PC-9 (cell line): ENCODE measurements at regions of chr20 and their contacts with region 1.

Region 1: DNA sequence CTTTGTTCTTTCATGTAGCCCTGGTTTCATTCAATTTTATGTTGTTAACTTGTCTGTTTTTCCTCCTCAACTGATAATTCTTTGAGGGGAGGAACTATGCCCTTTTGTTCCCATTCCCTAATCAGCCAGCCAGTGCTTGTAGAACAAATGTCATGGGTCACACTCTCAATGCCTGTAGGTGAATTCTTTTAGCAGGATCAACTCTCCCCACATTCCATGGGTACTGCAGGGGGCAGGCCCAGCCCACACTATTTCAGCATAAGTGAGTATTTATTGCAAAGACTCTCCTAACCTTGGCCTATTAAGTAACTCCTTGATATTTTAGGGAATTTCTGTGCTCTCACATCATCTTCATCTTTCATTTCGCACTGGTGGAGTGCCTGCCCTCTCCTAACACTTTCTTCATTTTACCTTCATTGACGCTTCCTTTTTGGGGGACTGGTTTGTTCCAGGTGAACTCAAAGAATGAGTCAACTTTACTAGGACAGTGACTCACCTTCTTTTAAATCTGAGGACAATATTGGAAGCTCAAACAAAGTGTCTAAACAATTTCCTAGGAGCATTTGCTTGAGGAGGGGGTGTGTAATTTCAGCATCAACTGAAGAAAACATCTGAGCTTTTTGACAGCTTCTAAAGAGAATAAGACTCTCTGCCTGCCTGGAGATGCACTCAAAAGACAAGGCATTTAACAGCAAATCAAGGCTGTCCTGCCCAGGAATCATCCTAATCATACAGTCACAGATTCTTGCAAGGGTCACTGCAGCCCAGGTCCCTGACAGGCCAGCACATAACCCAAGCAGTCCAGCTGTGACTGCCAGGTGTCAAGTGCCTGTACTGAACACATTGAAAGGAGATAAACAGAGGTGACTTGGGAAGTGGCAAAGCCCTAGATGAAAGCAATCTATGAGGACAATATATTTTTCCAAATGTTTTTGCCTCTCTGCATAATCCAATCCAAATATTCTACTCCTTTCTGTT is 263.9 kb upstream of the PRND start:
- DNase-seq: peak; percentile 39 to 84
- H3K4me3 ChIP-seq: peak overlapping the region; percentile 13; the same call in 1 of the 2 replicates
- H3K27ac ChIP-seq: peak overlapping the region; percentile 76
- H3K4me1 ChIP-seq: peaks cover 67% of the 10 kb centered on the region
- H3K27me3 ChIP-seq: no peaks in the 10 kb centered on the region
- CTCF ChIP-seq: no peak

Region 2: GRCh38 chr20:4135385-4136077 is 322.3 kb before region 1 on chr20:
- CTCF ChIA-PET with region 1: no interaction called
- POLR2A ChIA-PET with region 1: no interaction called
- intact Hi-C with region 1: loop called (anchors 5 kb)
- DNase-seq: peak; percentile 84 to 97
- H3K4me3 ChIP-seq: no peak overlapping the region
- H3K27ac ChIP-seq: peak overlapping the region; percentile 75
- H3K4me1 ChIP-seq: peaks cover 60% of the 10 kb centered on the region
- H3K27me3 ChIP-seq: no peaks in the 10 kb centered on the region
- CTCF ChIP-seq: no peak

Region 3: DNA sequence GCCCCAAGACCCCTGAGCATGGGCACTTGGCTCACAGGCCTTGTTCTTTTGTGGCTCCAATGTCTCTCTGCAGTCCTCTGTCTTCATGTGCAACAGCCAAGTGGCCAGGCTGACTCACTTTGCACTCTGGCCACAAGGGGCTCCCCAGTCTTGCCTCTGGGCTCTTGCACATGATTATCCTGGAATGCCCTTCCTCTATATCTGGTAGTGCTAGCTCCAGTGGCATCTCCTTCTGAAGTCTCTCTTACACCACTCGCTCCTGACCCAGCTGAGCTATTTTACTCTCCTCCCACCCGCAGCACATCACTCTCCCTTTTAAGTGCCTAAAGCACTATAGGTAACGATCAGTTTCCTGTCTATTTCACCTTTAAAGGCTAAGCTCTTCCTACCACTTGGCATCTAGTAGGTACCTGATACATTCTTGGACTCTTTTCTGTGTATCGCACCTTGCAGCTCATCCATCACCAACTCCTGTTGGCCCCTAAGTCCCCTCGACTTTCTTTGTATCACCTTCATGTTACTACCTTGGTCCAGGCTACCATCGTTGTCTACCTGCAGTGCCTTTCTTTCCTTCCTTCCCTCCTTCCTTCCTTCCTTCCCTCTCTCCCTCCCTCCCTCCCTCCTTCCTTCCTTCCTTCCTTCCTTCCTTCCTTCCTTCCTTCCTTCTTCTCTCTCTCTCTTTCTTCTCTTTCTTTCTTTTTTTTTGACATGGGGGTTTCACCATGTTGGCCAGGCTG is 230.6 kb before region 1 on chr20:
- CTCF ChIA-PET with region 1: no interaction called
- POLR2A ChIA-PET with region 1: no interaction called
- intact Hi-C with region 1: loop called (anchors 2 kb)
- DNase-seq: peak in 1 of 2 experiments; percentile 60
- H3K4me3 ChIP-seq: no peak overlapping the region
- H3K27ac ChIP-seq: no peak overlapping the region; the same call in 1 of the 2 replicates
- H3K4me1 ChIP-seq: peaks cover 32% of the 10 kb centered on the region
- H3K27me3 ChIP-seq: no peaks in the 10 kb centered on the region
- CTCF ChIP-seq: peak; percentile 55

Region 4: GRCh38 chr20:4502756-4503155 is 44.9 kb after region 1 on chr20:
- CTCF ChIA-PET with region 1: no interaction called
- POLR2A ChIA-PET with region 1: no interaction called
- intact Hi-C with region 1: loop called (anchors 1 kb)
- DNase-seq: peak in 1 of 2 experiments; percentile 7
- H3K4me3 ChIP-seq: no peak overlapping the region
- H3K27ac ChIP-seq: no peak overlapping the region
- H3K4me1 ChIP-seq: peaks cover 6% of the 10 kb centered on the region; the same call in 1 of the 2 replicates
- H3K27me3 ChIP-seq: no peaks in the 10 kb centered on the region
- CTCF ChIP-seq: no peak

Region 5: DNA sequence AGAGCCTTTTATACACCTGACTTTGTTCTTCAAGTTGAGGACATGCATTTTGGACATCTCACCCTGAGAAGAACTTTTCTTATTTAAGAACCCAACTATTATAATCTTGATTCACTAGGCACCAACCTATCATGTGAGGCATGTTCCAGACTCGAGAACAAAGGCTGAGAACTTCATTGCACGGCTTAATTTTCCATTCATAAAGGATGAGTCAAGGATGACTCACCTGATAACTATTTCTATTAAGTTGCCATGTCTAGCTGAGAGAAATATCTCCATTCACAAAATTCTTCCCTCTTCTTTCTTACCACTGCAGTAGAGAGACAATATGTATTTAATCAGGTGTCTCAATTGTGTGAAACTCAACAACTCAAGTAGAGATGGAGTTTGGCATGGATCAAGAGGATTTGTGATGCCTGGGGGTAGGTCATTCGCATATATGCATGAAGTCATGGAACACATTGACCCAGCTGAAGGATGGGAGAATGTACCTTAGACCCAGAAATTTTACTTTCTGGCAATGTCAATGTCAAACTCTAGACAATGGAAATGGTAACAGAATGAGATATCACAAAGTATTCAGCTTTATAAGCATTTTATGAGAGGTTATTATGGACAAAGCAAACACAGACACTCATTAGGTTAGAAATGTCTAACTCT is 55.2 kb after region 1 on chr20:
- CTCF ChIA-PET with region 1: no interaction called
- POLR2A ChIA-PET with region 1: no interaction called
- intact Hi-C with region 1: loop called (anchors 2 kb)
- DNase-seq: peak; percentile 33 to 87
- H3K4me3 ChIP-seq: no peak overlapping the region
- H3K27ac ChIP-seq: peak overlapping the region; percentile 39
- H3K4me1 ChIP-seq: peaks cover 28% of the 10 kb centered on the region
- H3K27me3 ChIP-seq: no peaks in the 10 kb centered on the region
- CTCF ChIP-seq: no peak

Region 6: DNA sequence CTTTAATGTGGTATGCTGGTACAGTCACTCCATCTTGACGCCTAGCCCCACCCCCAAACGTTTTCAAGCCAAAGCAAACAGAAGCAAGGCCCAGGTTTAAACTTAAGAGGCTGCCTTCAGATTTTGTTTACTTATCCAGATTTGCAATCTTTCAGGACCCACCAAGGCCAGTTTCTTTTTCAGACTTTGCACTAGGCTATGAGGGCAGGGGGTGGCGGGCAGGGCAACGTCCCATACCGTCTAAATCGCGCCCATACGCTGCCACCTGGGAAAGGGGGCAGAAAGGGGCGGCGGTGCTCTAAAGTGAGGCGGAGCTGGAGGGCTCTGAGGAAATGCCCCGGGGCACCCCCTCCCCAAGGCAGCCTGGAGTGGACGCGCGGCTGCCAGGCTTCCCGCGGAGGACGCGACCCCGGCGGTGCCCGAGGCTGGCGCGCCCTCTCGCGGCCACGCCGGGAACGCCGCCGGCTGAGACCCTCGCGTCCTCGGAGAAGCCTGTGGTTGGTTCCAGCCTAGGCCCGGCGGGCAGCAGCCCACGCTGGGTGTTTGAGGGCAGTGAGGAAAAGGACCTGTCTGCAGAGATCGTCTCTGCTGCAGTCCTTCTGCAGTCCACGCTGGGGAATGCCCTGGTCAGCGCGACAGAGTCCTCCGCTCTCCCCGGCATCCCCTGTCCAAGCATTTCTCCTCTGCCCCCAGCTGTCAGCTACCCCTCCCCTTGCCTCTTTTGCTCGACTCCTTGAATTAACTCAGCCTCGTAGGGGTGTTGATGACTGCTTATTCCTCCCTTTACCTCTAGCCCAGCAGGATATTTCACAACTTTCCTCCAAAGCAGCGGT is 134.7 kb after region 1 on chr20:
- CTCF ChIA-PET with region 1: no interaction called
- POLR2A ChIA-PET with region 1: no interaction called
- intact Hi-C with region 1: loop called (anchors 5 kb)
- DNase-seq: peak in 1 of 2 experiments; percentile 67
- H3K4me3 ChIP-seq: peak overlapping the region; percentile 48; the same call in 1 of the 2 replicates
- H3K27ac ChIP-seq: no peak overlapping the region
- H3K4me1 ChIP-seq: peaks cover 5% of the 10 kb centered on the region; the same call in 1 of the 2 replicates
- H3K27me3 ChIP-seq: no peaks in the 10 kb centered on the region
- CTCF ChIP-seq: peak; percentile 89

Region 7: GRCh38 chr20:4713401-4713800 is 255.5 kb after region 1 on chr20:
- CTCF ChIA-PET with region 1: no interaction called
- POLR2A ChIA-PET with region 1: no interaction called
- intact Hi-C with region 1: loop called (anchors 5 kb)
- DNase-seq: peak; percentile 91 to 100
- H3K4me3 ChIP-seq: no peak overlapping the region
- H3K27ac ChIP-seq: peak overlapping the region; percentile 78
- H3K4me1 ChIP-seq: peaks cover 22% of the 10 kb centered on the region
- H3K27me3 ChIP-seq: no peaks in the 10 kb centered on the region
- CTCF ChIP-seq: no peak

Region 8: DNA sequence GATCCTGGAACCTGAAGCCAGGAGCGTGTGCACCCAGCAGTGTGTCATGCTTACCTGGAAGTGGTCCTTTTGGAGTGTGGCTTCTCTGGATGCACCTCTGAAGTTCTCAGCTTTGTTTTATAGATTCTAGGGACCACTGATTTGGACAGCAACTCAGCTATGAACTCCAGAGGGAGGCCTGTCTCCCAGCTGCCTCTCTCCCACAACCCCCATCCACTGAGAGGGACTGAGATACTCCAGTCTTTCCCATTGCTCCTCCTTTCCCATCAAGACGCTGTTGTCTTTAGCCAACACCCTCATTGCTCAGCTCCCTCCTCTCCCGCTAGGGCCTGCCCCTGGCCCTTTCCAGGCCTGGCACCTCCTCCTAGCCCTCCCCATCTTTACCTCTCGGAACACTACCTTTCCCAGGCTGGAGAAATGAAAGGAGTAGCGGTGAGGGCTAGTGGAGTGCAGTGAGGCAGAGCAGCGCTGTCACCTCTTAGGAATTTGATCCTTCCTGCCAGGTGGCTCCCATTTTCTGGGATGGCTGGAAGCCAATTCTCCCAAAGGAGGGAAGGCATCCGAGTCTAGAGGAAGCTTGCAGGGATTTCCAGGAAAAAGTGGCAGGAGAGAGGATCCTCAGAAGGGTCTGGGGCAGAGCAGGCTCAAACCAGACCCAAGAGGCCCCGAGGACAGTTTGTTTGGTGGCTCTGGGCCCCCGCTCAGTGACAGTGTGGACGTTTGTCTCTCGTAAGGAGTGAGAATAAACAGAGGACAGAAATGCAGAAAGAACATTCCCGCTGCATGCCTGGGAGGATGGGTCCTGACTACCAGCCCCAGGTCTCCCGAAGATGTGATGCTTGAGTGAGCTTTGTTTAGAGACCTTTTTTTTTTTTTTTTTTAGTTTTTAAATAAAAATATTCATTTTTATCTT is 1596.2 kb after region 1 on chr20 and contains the start of gene LRRN4:
- CTCF ChIA-PET with region 1: no interaction called
- POLR2A ChIA-PET with region 1: no interaction called
- intact Hi-C with region 1: no loop called
- DNase-seq: peak; percentile 79
- H3K4me3 ChIP-seq: peak within 1 kb of the TSS; percentile 10; the same call in 1 of the 2 replicates
- H3K27ac ChIP-seq: no peak within 1 kb of the TSS
- H3K4me1 ChIP-seq: peaks cover 27% of the 10 kb centered on the region
- H3K27me3 ChIP-seq: no peaks in the 10 kb centered on the region
- CTCF ChIP-seq: no peak
- total RNA-seq, gene LRRN4: 0.23 and 0.72 TPM in 2 replicates